CD14-positive monocyte (primary cell): ENCODE measurements at regions of chr20 and their contacts with region 1.

Region 1: GRCh38 chr20:1854246-1854645 is 41.0 kb upstream of the SIRPA start:
- DNase-seq: no peak
- H3K4me3 ChIP-seq: no peak overlapping the region
- H3K4me3 Mint-ChIP-seq: no peak overlapping the region
- H3K27ac ChIP-seq: peak overlapping the region in 1 of 2 donors; percentile 35
- H3K27ac Mint-ChIP-seq: peak overlapping the region in 6 of 7 donors; percentile 58 to 93 (median 87)
- H3K4me1 ChIP-seq: peaks cover 81 to 86% of the 10 kb centered on the region in 2 donors
- H3K4me1 Mint-ChIP-seq: peaks cover 81% of the 10 kb centered on the region
- H3K27me3 ChIP-seq: no peaks in the 10 kb centered on the region
- H3K27me3 Mint-ChIP-seq: no peaks in the 10 kb centered on the region
- CTCF ChIP-seq: no peak

Region 2: GRCh38 chr20:1888796-1889463 is 34.7 kb after region 1 on chr20:
- intact Hi-C with region 1: loop called in 1 of 2 experiments (anchors 5 kb)
- DNase-seq: peak; percentile 85 to 95 (median 88)
- H3K4me3 ChIP-seq: peak overlapping the region in 1 of 3 experiments; percentile 38
- H3K4me3 Mint-ChIP-seq: peak overlapping the region in 1 of 2 donors; percentile 62
- H3K27ac ChIP-seq: peak overlapping the region; percentile 18 to 23
- H3K27ac Mint-ChIP-seq: peak overlapping the region; percentile 45 to 84 (median 75)
- H3K4me1 ChIP-seq: peaks cover 53 to 64% of the 10 kb centered on the region in 2 donors
- H3K4me1 Mint-ChIP-seq: peaks cover 77% of the 10 kb centered on the region
- H3K27me3 ChIP-seq: no peaks in the 10 kb centered on the region
- H3K27me3 Mint-ChIP-seq: peaks cover 12 to 27% (median 18%) of the 10 kb centered on the region in 3 donors
- CTCF ChIP-seq: peak; percentile 13

Region 3: GRCh38 chr20:1987826-1988225 is 133.6 kb after region 1 on chr20:
- intact Hi-C with region 1: no loop called
- DNase-seq: no peak
- H3K4me3 ChIP-seq: no peak overlapping the region
- H3K4me3 Mint-ChIP-seq: no peak overlapping the region
- H3K27ac ChIP-seq: no peak overlapping the region
- H3K27ac Mint-ChIP-seq: no peak overlapping the region
- H3K4me1 ChIP-seq: peaks cover 6 to 10% of the 10 kb centered on the region in 2 donors
- H3K4me1 Mint-ChIP-seq: peaks cover 10% of the 10 kb centered on the region
- H3K27me3 ChIP-seq: peaks cover 0 to 52% of the 10 kb centered on the region in 2 donors
- H3K27me3 Mint-ChIP-seq: peaks cover 48 to 53% (median 50%) of the 10 kb centered on the region in 3 donors
- CTCF ChIP-seq: no peak